ENCODE measurements at regions of chr3 and their contacts with region 1.

Region 1: GRCh38 chr3:37833302-37834186 is 28.1 kb upstream of the CTDSPL start:
- DNase-seq: no peak
- H3K4me3 ChIP-seq: no peak overlapping the region
- H3K27ac ChIP-seq: no peak overlapping the region
- H3K4me1 ChIP-seq: no peaks in the 10 kb centered on the region
- H3K27me3 ChIP-seq: no peaks in the 10 kb centered on the region
- CTCF ChIP-seq: no peak
- POLR2A ChIP-seq: no peak

Region 2: DNA sequence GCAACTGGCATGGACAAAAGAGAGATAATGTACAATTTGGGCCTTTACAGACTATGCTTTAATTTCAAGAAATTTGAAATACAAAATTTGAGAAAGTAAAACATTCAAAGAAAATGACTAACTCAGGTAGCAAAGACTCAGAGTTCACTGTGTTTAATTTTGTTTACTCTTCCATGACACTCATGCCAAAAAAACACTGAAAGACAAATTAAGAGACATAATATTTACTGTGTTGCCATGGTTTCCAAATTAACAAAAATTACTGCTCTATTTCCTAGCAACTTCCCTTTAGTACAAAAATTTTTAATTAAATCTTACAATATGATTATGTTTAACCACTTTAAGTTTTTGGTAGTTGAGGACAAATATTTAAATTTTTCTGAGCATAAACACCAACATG is 688.7 kb before region 1 on chr3:
- intact Hi-C with region 1: no loop called
- DNase-seq: no peak
- H3K4me3 ChIP-seq: no peak overlapping the region
- H3K27ac ChIP-seq: no peak overlapping the region
- H3K4me1 ChIP-seq: no peaks in the 10 kb centered on the region
- H3K27me3 ChIP-seq: no peaks in the 10 kb centered on the region
- CTCF ChIP-seq: no peak
- POLR2A ChIP-seq: no peak

Region 3: DNA sequence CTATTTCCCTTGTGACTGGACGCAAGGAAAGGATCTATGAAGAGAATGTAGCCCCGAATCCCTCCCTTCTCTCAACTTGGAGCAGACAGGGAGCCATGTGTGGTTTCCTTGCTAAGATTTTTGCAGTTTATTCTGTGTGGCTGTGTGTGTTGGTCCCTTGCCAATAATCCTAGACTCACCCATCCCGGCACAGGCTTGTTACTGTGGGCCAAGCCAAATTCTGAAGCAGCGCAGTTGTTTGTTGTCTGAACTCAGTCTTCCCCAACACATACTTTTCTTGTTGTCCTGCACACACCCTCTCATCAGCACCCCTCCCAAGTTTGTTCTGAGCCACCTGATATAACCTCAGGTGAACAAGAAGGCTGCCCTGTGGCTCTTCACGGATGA is 165.1 kb before region 1 on chr3:
- intact Hi-C with region 1: no loop called
- DNase-seq: no peak
- H3K4me3 ChIP-seq: no peak overlapping the region
- H3K27ac ChIP-seq: no peak overlapping the region
- H3K4me1 ChIP-seq: peaks cover 0 to 13% of the 10 kb centered on the region in 2 donors
- H3K27me3 ChIP-seq: no peaks in the 10 kb centered on the region
- CTCF ChIP-seq: no peak
- POLR2A ChIP-seq: no peak

Region 4: GRCh38 chr3:37772773-37773354 is 60.7 kb before region 1 on chr3:
- intact Hi-C with region 1: loop called (anchors 2 kb)
- DNase-seq: no peak
- H3K4me3 ChIP-seq: no peak overlapping the region
- H3K27ac ChIP-seq: no peak overlapping the region
- H3K4me1 ChIP-seq: no peaks in the 10 kb centered on the region
- H3K27me3 ChIP-seq: no peaks in the 10 kb centered on the region
- CTCF ChIP-seq: no peak
- POLR2A ChIP-seq: no peak

Region 5: DNA sequence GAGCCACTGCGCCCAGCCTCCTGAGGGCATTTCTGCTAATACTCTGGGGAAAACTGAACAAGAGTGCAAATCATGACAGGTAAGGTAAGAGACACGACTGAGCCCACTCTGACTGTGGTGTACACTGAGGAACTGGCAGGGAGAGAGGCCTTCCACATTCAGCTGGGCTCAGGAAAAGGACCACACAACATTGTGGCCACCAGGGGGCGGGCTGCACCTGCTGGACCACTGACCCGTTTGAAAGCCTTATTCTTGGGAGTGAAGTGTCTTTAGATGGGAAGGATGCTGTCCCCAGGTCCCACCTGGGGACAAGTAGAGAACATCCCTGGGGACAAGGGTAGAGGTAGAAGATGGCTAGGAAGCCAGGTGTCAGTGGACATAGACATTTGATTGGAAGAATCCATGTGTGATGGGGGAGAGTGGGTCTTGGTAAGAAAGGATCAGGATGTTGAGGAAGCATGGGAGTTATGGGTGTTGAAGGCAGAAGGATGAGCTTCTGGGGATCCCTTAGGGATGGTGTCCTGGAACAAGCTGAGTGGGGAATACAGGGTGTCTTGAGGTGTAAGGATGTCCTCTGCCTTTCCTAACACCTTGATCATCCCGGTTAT is 21.9 kb after region 1 on chr3:
- intact Hi-C with region 1: no loop called
- DNase-seq: peak; percentile 78 to 89
- H3K4me3 ChIP-seq: no peak overlapping the region
- H3K27ac ChIP-seq: peak overlapping the region; percentile 54 to 61
- H3K4me1 ChIP-seq: peaks cover 0 to 3% of the 10 kb centered on the region in 2 donors
- H3K27me3 ChIP-seq: no peaks in the 10 kb centered on the region
- CTCF ChIP-seq: peak; percentile 90 to 96 (median 93)
- POLR2A ChIP-seq: no peak

Measured in breast epithelium (tissue), 4 donors.